ENCODE measurements at regions of chr15 and their contacts with region 1.

Region 1: DNA sequence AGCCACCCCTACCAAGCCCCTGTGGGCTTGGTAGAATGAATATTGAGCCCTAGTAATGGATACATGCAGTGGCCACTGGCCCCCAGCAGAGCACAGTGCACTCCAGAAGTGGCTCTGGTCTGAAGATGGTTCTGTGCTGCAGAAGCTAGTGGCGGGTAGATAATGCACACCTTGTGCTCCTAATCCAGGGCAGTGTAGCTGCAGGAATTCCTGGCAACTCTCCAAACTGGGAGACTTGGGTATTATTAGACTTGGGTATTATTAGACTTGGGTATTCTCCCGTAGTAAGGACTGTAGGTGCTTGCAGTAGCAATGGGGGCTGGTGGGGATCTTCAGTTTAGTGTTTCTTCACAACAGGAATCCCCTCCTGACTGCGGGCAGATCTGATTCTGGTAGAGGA is 34.7 kb downstream of the NUSAP1 start:
- DNase-seq: no peak
- H3K4me3 ChIP-seq: no peak overlapping the region
- H3K27ac ChIP-seq: no peak overlapping the region
- H3K4me1 ChIP-seq: no peaks in the 10 kb centered on the region
- H3K27me3 ChIP-seq: no peaks in the 10 kb centered on the region
- CTCF ChIP-seq: no peak
- POLR2A ChIP-seq: no peak

Region 2: DNA sequence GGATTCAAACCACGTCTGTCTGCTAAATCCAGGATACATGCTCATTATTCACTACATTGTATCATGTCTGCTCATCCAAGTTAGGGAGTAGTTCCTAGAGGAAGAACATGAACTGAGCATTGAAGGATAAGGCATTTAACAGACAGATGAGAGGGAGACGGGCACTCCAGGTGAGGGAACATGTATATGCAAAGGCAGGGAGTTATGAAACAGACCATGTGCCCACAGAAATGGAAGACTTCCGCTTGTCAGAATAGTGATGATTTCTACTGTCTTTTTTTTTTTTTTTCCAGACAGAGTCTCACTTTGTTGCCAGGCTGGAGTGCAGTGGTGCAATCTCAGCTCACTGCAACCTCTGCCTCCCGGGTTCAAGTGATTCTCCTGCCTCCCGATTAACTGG is 39.9 kb after region 1 on chr15:
- CTCF ChIA-PET with region 1: no interaction called
- POLR2A ChIA-PET with region 1: interaction called, 10 read pairs
- dilution Hi-C with region 1: no loop called
- intact Hi-C with region 1: no loop called
- DNase-seq: no peak
- H3K4me3 ChIP-seq: no peak overlapping the region
- H3K27ac ChIP-seq: no peak overlapping the region
- H3K4me1 ChIP-seq: peaks cover 2% of the 10 kb centered on the region
- H3K27me3 ChIP-seq: no peaks in the 10 kb centered on the region
- CTCF ChIP-seq: no peak
- POLR2A ChIP-seq: no peak